ENCODE measurements at regions of chr4 and their contacts with region 1.

Region 1: DNA sequence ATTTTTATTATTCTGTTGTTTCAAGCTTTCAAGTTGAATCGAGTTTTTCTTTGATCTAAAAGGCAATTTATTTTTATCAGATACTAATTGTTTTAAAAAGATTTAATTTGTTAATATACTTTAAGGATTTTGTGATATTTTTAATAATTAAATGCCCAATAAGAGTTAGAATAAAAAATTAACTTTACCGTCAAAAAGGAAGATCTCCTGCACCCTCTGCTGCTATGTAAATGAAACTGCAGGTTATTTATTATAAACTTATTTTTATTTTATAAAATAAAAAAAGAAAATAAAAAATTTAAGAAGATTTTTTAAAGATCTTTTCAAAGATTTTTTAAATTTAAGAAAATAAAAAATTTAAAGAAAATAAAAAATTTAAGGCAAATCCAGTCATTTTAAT is 166.1 kb downstream of the CCSER1 start:
- DNase-seq: no peak
- H3K4me3 Mint-ChIP-seq: no peak overlapping the region
- H3K27ac Mint-ChIP-seq: no peak overlapping the region
- H3K4me1 Mint-ChIP-seq: no peaks in the 10 kb centered on the region
- H3K27me3 Mint-ChIP-seq: no peaks in the 10 kb centered on the region

Region 2: GRCh38 chr4:90025248-90025647 is 268.1 kb before region 1 on chr4:
- CTCF ChIA-PET with region 1: interaction called, 3 read pairs
- POLR2A ChIA-PET with region 1: no interaction called
- intact Hi-C with region 1: loop called (anchors 10 kb)
- DNase-seq: no peak
- H3K4me3 Mint-ChIP-seq: no peak overlapping the region
- H3K27ac Mint-ChIP-seq: no peak overlapping the region
- H3K4me1 Mint-ChIP-seq: no peaks in the 10 kb centered on the region
- H3K27me3 Mint-ChIP-seq: no peaks in the 10 kb centered on the region

Region 3: DNA sequence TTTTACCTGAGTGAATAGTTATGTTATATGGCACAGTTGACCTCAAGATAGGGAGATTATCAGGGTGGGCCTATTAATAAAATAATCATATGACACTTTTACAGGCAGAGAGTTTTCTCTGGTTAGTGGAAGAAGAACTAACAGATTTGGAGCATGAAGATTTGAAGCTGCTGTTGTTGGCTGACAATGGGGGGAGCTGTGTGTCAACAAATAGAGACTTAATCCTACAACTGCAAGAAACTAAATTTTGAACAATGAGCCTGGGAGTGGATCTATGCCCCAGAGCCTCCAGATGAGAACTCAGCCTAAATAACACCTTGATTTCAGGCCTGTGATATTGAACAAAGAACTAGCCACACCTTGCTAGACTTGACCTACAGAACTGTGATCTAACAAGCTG is 173.3 kb before region 1 on chr4:
- CTCF ChIA-PET with region 1: interaction called, 3 read pairs
- POLR2A ChIA-PET with region 1: no interaction called
- intact Hi-C with region 1: loop called (anchors 5 kb)
- DNase-seq: no peak
- H3K4me3 Mint-ChIP-seq: no peak overlapping the region
- H3K27ac Mint-ChIP-seq: no peak overlapping the region
- H3K4me1 Mint-ChIP-seq: no peaks in the 10 kb centered on the region
- H3K27me3 Mint-ChIP-seq: peaks cover 5% of the 10 kb centered on the region

Measured in activated CD4-positive, alpha-beta memory T cell treated with anti-CD3 and anti-CD28 coated beads for 36 hours (primary cell).